Gastrocnemius medialis (tissue), 4 donors: ENCODE measurements at regions of chr5 and their contacts with region 1.

Region 1: GRCh38 chr5:140357726-140358093 is 2.3 kb upstream of the SLC4A9 start:
- DNase-seq: peak; percentile 63 to 79
- ATAC-seq: peak; percentile 84 to 91
- H3K4me3 ChIP-seq: peak overlapping the region in 3 of 4 donors; percentile 25 to 59 (median 37)
- H3K27ac ChIP-seq: no peak overlapping the region
- H3K4me1 ChIP-seq: peaks cover 3 to 8% of the 10 kb centered on the region in 2 donors
- H3K27me3 ChIP-seq: no peaks in the 10 kb centered on the region
- CTCF ChIP-seq: peak; percentile 78 to 94 (median 86)
- POLR2A ChIP-seq: no peak

Region 2: GRCh38 chr5:139335811-139336210 is 1021.9 kb before region 1 on chr5:
- in situ Hi-C with region 1: no loop called
- intact Hi-C with region 1: no loop called
- DNase-seq: no peak
- ATAC-seq: no peak
- H3K4me3 ChIP-seq: no peak overlapping the region
- H3K27ac ChIP-seq: no peak overlapping the region
- H3K4me1 ChIP-seq: peaks cover 0 to 1% of the 10 kb centered on the region in 2 donors
- H3K27me3 ChIP-seq: no peaks in the 10 kb centered on the region
- CTCF ChIP-seq: no peak
- POLR2A ChIP-seq: no peak

Region 3: GRCh38 chr5:140113699-140114263 is 243.9 kb before region 1 on chr5 and contains the start of gene PURA:
- in situ Hi-C with region 1: no loop called
- intact Hi-C with region 1: no loop called
- DNase-seq: peak; percentile 91 to 94
- ATAC-seq: peak; percentile 94 to 95
- H3K4me3 ChIP-seq: peak within 1 kb of the TSS; percentile 78 to 91 (median 85)
- H3K27ac ChIP-seq: peak within 1 kb of the TSS; percentile 94 to 97 (median 95)
- H3K4me1 ChIP-seq: peaks cover 64 to 70% of the 10 kb centered on the region in 2 donors
- H3K27me3 ChIP-seq: no peaks in the 10 kb centered on the region
- CTCF ChIP-seq: peak in 2 of 5 experiments; percentile 11 to 37
- POLR2A ChIP-seq: peak; percentile 79 to 80
- total RNA-seq, gene PURA: 13.6 to 20.6 (median 16.5) TPM

Region 4: GRCh38 chr5:140169410-140169809 is 188.3 kb before region 1 on chr5:
- in situ Hi-C with region 1: loop called in 2 of 4 experiments (anchors 5 to 10 kb)
- intact Hi-C with region 1: no loop called
- DNase-seq: no peak
- ATAC-seq: no peak
- H3K4me3 ChIP-seq: no peak overlapping the region
- H3K27ac ChIP-seq: no peak overlapping the region
- H3K4me1 ChIP-seq: peaks cover 3% of the 10 kb centered on the region in 2 donors
- H3K27me3 ChIP-seq: no peaks in the 10 kb centered on the region
- CTCF ChIP-seq: peak in 1 of 5 experiments; percentile 30
- POLR2A ChIP-seq: no peak